ENCODE measurements at regions of chr18 and their contacts with region 1.

Region 1: DNA sequence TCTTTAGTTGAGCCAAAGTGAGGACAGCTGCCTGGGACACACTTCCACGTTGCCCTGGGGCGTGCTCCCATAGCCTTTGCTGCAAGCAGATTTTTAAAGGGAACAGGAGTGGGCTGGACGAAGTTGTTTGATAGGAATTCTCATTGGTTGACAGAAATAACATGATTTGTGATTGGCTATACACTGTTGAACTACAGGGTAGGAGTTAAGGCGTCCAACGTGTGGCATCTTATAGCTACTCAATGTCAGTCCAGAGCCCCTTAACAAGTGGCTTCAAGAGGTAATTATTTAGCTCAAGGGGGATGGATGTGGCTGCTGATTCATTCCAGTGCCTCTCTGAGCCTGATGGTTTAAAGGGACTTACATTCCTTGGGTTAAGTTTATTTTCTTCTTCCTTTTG is 65.5 kb downstream of the ACAA2 start:
- DNase-seq: no peak
- ATAC-seq: no peak
- H3K4me3 ChIP-seq: no peak overlapping the region
- H3K27ac ChIP-seq: no peak overlapping the region
- H3K4me1 ChIP-seq: no peaks in the 10 kb centered on the region
- H3K27me3 ChIP-seq: no peaks in the 10 kb centered on the region
- CTCF ChIP-seq: no peak

Region 2: DNA sequence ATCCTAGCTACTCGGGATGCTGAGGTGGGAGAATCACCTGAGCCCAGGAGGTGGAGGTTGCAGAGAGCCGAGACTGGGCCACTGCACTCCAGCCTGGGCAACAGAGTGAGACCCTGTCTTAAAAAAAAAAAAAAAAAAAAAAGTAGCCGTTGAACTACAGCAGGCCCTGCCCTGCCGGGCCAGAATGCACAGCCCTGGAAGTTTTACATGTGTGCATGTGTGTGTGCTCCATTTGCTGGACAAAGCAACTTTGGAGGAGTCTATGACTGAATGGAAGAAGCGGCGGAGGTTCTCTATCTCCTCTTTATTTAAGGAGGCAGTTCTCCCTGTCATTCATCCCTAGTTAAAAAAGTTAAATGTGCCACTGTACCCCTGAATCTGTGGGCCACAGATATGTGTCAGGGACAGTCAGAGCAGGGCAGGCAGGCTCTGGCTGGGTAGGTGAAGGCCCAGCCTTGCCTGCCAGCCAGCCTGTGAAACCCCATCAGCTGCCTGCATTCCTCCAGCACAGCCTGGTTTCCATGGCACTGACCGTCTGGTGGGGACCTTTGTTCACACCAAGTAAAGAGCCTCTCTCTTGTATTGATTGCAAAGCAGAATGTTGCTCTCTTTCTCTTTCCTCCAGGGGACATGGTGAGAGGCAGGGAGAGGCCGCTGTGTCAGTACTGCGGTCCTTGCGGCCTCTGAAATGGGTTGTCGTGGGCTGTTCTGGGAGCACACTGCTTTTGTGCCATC is 175.1 kb before region 1 on chr18:
- CTCF ChIA-PET with region 1: no interaction called
- POLR2A ChIA-PET with region 1: no interaction called
- in situ Hi-C with region 1: no loop called
- intact Hi-C with region 1: no loop called
- DNase-seq: no peak
- ATAC-seq: no peak; the same call in 1 of the 2 replicates
- H3K4me3 ChIP-seq: no peak overlapping the region
- H3K27ac ChIP-seq: no peak overlapping the region
- H3K4me1 ChIP-seq: no peaks in the 10 kb centered on the region
- H3K27me3 ChIP-seq: no peaks in the 10 kb centered on the region
- CTCF ChIP-seq: no peak

Region 3: DNA sequence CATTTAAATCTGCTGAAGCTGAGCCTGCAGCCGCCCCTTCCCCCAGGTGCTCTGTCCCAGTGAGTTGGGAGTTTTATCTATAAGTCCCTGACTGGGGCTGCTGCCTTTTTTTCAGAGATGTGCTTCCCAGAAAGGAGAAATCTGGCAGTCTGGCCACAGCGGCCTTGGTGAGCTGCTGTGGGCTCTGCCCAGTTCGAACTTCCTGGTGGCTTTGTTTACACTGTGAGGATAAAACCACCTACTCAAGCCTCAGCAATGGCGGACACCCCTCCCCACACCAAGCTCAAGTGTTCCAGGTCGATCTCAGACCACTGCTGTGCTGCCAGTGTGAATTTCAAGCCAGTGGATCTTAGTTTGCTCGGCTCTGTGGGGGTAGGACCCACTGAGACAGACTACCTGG is 31.8 kb before region 1 on chr18:
- CTCF ChIA-PET with region 1: no interaction called
- POLR2A ChIA-PET with region 1: no interaction called
- in situ Hi-C with region 1: no loop called
- intact Hi-C with region 1: no loop called
- DNase-seq: no peak
- ATAC-seq: no peak
- H3K4me3 ChIP-seq: no peak overlapping the region
- H3K27ac ChIP-seq: no peak overlapping the region
- H3K4me1 ChIP-seq: no peaks in the 10 kb centered on the region
- H3K27me3 ChIP-seq: no peaks in the 10 kb centered on the region
- CTCF ChIP-seq: no peak

Region 4: GRCh38 chr18:49762191-49763077 is 14.6 kb after region 1 on chr18:
- CTCF ChIA-PET with region 1: no interaction called
- POLR2A ChIA-PET with region 1: interaction called, 10 read pairs
- in situ Hi-C with region 1: no loop called
- intact Hi-C with region 1: no loop called
- DNase-seq: no peak
- ATAC-seq: 0 out of 2 replicates have a peak, but pooled peaks have one; percentile 44
- H3K4me3 ChIP-seq: no peak overlapping the region
- H3K27ac ChIP-seq: no peak overlapping the region
- H3K4me1 ChIP-seq: no peaks in the 10 kb centered on the region
- H3K27me3 ChIP-seq: no peaks in the 10 kb centered on the region
- CTCF ChIP-seq: no peak